Mammary epithelial cell (primary cell): ENCODE measurements at regions of chr9 and their contacts with region 1.

Region 1: GRCh38 chr9:74773886-74774479 is 113.7 kb downstream of the TRPM6 start:
- DNase-seq: peak; percentile 52
- H3K4me3 ChIP-seq: no peak overlapping the region
- H3K27ac ChIP-seq: no peak overlapping the region
- H3K4me1 ChIP-seq: no peaks in the 10 kb centered on the region
- H3K27me3 ChIP-seq: no peaks in the 10 kb centered on the region
- CTCF ChIP-seq: peak; percentile 87 to 94

Region 2: GRCh38 chr9:74951725-74952151 is 177.8 kb after region 1 on chr9:
- CTCF ChIA-PET with region 1: no interaction called
- dilution Hi-C with region 1: no loop called
- in situ Hi-C with region 1: no loop called
- intact Hi-C with region 1: loop called (anchors 1 kb)
- DNase-seq: peak; percentile 35
- H3K4me3 ChIP-seq: peak overlapping the region; percentile 86 to 95 (median 89)
- H3K27ac ChIP-seq: peak overlapping the region; percentile 54
- H3K4me1 ChIP-seq: no peaks in the 10 kb centered on the region
- H3K27me3 ChIP-seq: no peaks in the 10 kb centered on the region
- CTCF ChIP-seq: no peak

Region 3: GRCh38 chr9:75071530-75072124 is 297.6 kb after region 1 on chr9:
- CTCF ChIA-PET with region 1: no interaction called
- dilution Hi-C with region 1: no loop called
- in situ Hi-C with region 1: loop called (anchors 5 kb)
- intact Hi-C with region 1: no loop called
- DNase-seq: peak; percentile 81
- H3K4me3 ChIP-seq: no peak overlapping the region
- H3K27ac ChIP-seq: peak overlapping the region; percentile 4
- H3K4me1 ChIP-seq: peaks cover 9% of the 10 kb centered on the region
- H3K27me3 ChIP-seq: no peaks in the 10 kb centered on the region
- CTCF ChIP-seq: no peak

Region 4: GRCh38 chr9:75866273-75866871 is 1092.4 kb after region 1 on chr9:
- CTCF ChIA-PET with region 1: no interaction called
- dilution Hi-C with region 1: no loop called
- in situ Hi-C with region 1: no loop called
- intact Hi-C with region 1: loop called (anchors 10 kb)
- DNase-seq: peak; percentile 27
- H3K4me3 ChIP-seq: no peak overlapping the region
- H3K27ac ChIP-seq: no peak overlapping the region
- H3K4me1 ChIP-seq: no peaks in the 10 kb centered on the region
- H3K27me3 ChIP-seq: no peaks in the 10 kb centered on the region
- CTCF ChIP-seq: peak; percentile 66 to 69